ENCODE measurements at regions of chr3 and their contacts with region 1.

Region 1: GRCh38 chr3:179299999-179300613 is 22.7 kb upstream of the ZNF639 start:
- DNase-seq: peak in 1 of 4 experiments; percentile 8
- ATAC-seq: no peak
- H3K4me3 ChIP-seq: no peak overlapping the region
- H3K27ac ChIP-seq: peak overlapping the region; percentile 16; the same call in 2 of the 3 replicates
- H3K4me1 ChIP-seq: peaks cover 9 to 16% of the 10 kb centered on the region in 2 experiments; a peak in 3 of 5 replicates
- H3K27me3 ChIP-seq: no peaks in the 10 kb centered on the region
- CTCF ChIP-seq: no peak
- EP300 ChIP-seq: no peak
- POLR2A ChIP-seq: no peak
- RAD21 ChIP-seq: no peak

Region 2: DNA sequence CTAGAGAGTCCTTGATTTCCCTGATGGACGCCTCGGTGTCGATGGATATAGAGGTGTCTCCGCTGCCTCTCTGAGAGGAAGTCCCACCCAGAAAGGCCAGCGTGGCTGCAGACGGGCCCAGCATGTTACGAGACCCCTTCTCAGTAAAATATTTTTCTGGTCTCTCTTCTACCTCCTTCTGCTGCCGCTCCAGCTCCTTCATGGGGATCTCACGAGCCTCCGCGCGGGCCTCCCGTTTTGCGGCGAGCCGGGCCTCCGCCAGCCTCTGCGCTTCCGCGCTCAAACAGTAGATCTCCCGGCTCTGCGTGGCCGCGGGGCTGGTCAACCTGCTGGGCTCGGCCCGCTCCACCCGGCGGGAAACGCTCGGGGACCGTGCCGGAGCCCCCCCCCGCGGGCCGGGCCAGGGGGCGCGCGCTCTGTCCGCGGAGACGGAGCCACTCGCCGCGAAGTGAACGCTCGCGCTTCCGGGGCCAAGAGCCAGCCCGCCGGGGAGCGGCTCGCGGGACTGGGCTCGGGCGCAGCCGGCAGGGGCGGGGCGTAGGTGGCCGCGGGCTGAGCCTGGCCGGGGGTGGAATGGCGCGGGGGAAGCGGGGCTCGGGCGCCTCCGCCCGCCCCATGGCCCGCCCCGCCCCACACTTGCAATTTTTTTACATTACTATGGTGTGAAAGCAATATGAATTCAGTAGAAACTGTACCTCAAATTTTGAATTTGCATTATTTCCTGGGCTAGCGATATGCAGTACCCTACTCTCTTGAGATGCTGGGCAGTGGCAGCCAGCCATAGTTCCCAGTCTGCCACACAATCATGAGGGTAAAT is 38.9 kb before region 1 on chr3:
- CTCF ChIA-PET with region 1: no interaction called
- POLR2A ChIA-PET with region 1: interaction called, 3 read pairs
- in situ Hi-C with region 1: no loop called
- intact Hi-C with region 1: loop called (anchors 2 kb)
- DNase-seq: peak; percentile 90 to 93 (median 92)
- ATAC-seq: peak; percentile 87
- H3K4me3 ChIP-seq: peak overlapping the region; percentile 63
- H3K27ac ChIP-seq: peak overlapping the region; percentile 89
- H3K4me1 ChIP-seq: peaks cover 24 to 25% of the 10 kb centered on the region in 2 experiments; a peak in 4 of 5 replicates
- H3K27me3 ChIP-seq: no peaks in the 10 kb centered on the region
- CTCF ChIP-seq: no peak
- EP300 ChIP-seq: no peak
- POLR2A ChIP-seq: peak; percentile 69; the same call in 1 of the 2 replicates
- RAD21 ChIP-seq: 0 out of 4 replicates have a peak, but pooled peaks of 1 of the 2 experiments have one; percentile 1

Measured in K562 (cell line).